AG04449 (cell line): ENCODE measurements at regions of chr4 and their contacts with region 1.

Region 1: DNA sequence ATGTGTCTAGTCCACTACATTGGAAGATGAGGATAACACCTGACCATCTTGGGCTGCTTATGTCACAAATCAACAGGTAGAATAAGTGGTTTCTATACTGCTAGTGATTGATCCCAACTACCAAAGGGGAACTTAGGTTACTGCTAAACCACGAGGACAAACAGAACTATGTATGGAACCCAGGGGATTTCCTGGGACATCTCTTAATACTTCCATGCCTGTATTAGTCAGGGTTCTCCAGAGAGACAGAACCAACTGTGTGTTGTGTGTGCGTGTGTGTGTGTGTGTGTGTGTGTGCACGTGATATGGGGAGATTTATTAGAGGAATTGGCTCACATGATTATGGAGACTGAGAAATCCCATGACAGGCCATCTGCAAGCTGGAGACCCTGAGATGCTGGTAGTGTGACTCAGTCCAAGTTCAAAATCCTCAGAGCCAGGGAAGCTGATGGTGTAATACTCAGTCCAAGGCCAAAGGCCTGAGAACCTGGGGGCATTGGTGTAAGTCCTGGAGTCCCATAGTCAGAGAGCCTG is 16.2 kb upstream of the AFF1 start:
- DNase-seq: peak; percentile 73
- H3K4me3 ChIP-seq: no peak overlapping the region
- CTCF ChIP-seq: no peak

Region 2: GRCh38 chr4:86706923-86707597 is 211.5 kb before region 1 on chr4:
- CTCF ChIA-PET with region 1: no interaction called
- POLR2A ChIA-PET with region 1: no interaction called
- DNase-seq: no peak
- H3K4me3 ChIP-seq: no peak overlapping the region
- CTCF ChIP-seq: no peak

Region 3: DNA sequence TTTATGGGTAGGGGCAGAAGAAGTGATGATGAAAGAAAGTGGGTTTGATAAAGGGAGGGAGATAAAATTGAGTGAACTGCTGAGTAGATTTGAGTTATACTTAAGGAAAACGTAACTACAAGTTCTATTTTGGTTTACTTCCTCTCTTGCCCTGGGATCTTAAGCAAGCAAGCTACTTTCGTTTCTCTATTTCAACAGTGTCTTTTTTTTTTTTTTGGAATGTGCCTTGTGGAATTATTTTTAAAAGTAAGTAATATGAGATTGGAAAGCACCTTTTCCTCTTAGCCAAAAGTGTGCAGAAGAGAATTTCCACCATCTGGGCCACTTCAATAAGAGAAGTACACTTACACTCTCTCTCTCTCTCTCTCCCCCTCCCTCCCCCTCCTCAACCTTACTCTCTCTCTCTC is 10.4 kb before region 1 on chr4:
- CTCF ChIA-PET with region 1: interaction called, 32 read pairs
- POLR2A ChIA-PET with region 1: no interaction called
- DNase-seq: no peak
- H3K4me3 ChIP-seq: no peak overlapping the region
- CTCF ChIP-seq: no peak

Region 4: GRCh38 chr4:87006676-87007527 is 88.3 kb after region 1 on chr4:
- CTCF ChIA-PET with region 1: interaction called, 9 read pairs
- POLR2A ChIA-PET with region 1: interaction called, 17 read pairs
- DNase-seq: peak; percentile 58
- H3K4me3 ChIP-seq: peak overlapping the region; percentile 79
- CTCF ChIP-seq: no peak

Region 5: GRCh38 chr4:87078987-87079486 is 160.4 kb after region 1 on chr4:
- CTCF ChIA-PET with region 1: interaction called, 10 read pairs
- POLR2A ChIA-PET with region 1: interaction called, 3 read pairs
- DNase-seq: no peak
- H3K4me3 ChIP-seq: no peak overlapping the region
- CTCF ChIP-seq: no peak

Region 6: DNA sequence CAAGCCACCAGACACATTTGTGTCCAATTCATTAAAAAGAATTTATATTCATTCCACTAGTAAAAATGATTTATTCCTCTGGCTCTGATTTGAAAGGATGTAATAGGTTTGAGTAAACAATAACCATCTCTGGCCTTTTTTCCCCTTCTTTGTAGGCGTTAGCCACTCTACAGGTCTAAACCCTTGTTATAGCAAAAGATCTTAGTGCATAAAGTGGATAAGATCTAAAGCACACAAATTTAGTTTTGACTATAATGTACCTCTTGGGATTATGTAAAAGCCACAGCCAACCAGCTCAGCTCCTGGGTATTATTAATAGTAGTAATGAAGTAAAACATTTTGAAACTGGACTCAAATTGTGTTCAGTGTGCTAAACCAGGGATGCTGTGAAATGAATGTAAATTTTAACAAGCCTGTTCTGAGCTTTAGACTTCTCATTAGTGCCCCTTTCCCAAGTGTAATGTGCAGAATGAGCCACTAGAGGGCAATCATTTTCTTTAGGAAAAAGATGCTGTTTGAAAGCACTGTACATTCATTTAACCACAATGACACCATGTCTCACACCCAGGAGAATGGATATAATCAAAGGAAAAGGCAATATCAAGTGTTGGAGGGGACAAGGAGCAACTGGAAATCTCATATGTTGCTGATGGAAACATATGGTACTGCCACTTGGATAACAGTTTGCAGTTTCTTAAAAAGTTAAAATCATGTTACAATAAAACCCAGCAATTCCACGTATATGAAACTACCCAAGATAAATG is 232.1 kb after region 1 on chr4:
- CTCF ChIA-PET with region 1: interaction called, 32 read pairs
- POLR2A ChIA-PET with region 1: no interaction called
- DNase-seq: peak; percentile 38
- H3K4me3 ChIP-seq: no peak overlapping the region
- CTCF ChIP-seq: peak; percentile 71

Region 7: GRCh38 chr4:87257523-87257922 is 338.9 kb after region 1 on chr4:
- CTCF ChIA-PET with region 1: no interaction called
- POLR2A ChIA-PET with region 1: no interaction called
- DNase-seq: no peak
- H3K4me3 ChIP-seq: no peak overlapping the region
- CTCF ChIP-seq: no peak

Region 8: DNA sequence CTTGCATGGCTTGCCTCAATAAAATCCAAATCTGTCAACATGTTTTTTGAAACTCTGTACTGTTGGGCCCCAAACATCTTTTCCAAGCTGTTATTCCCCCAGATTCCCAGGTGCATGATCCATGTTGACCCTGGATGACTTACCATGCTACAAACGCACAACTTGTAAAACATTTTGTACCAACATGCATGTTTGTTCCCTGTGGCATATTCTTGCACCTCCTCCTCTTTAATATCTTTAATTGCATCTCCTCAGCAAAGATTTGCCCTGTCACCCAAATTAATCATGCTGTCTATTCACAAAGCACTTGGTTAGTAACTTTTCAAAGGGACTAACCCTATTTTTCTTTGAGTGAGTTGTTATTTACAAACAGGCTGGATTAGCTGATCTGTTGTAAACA is 379.8 kb after region 1 on chr4:
- CTCF ChIA-PET with region 1: no interaction called
- POLR2A ChIA-PET with region 1: no interaction called
- DNase-seq: no peak
- H3K4me3 ChIP-seq: no peak overlapping the region
- CTCF ChIP-seq: no peak